Activated CD4-positive, alpha-beta T cell treated with anti-CD3 and anti-CD28 coated beads, Interleukin-2, amount 10 ng/mL, durations not matched to agents 24 days and 14 days (primary cell): ENCODE measurements at regions of chr9 and their contacts with region 1.

Region 1: GRCh38 chr9:33374634-33375213 is 27.6 kb downstream of the AQP7 start:
- DNase-seq: peak; percentile 91
- H3K4me3 Mint-ChIP-seq: peak overlapping the region; percentile 30
- H3K27ac Mint-ChIP-seq: peak overlapping the region; percentile 52
- H3K4me1 Mint-ChIP-seq: peaks cover 10% of the 10 kb centered on the region
- H3K27me3 Mint-ChIP-seq: no peaks in the 10 kb centered on the region

Region 2: DNA sequence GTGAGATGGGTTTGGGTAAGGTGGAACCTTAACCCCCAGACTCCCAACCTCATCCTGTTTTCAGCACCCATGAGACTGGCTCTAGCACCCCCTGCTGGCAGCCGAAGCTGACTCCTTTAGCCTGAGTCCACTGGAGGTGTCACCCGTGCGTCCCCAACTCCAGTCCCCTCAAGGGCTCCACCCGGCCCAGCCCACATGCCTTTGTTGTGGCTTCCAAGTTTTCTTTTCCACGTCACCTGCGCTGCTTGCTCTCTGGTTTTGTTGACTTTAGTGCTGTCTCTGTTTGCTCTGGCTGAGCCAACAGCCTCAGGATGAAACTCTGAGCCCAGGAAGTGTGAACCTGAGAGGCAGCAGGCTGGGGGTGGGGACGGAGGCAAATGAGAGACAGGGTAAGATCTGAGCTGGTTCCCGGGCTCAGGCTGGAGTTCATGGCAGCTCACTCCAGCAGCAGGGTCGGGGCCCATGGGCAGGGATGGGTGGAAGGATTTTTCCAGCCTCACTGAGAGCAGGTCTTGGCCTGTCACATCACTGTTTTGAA is 40.8 kb after region 1 on chr9:
- intact Hi-C with region 1: loop called (anchors 2 kb)
- DNase-seq: peak; percentile 98
- H3K4me3 Mint-ChIP-seq: peak overlapping the region; percentile 69
- H3K27ac Mint-ChIP-seq: peak overlapping the region; percentile 94
- H3K4me1 Mint-ChIP-seq: peaks cover 50% of the 10 kb centered on the region
- H3K27me3 Mint-ChIP-seq: peaks cover 2% of the 10 kb centered on the region

Region 3: GRCh38 chr9:33932078-33932807 is 557.5 kb after region 1 on chr9:
- intact Hi-C with region 1: no loop called
- DNase-seq: no peak
- H3K4me3 Mint-ChIP-seq: no peak overlapping the region
- H3K27ac Mint-ChIP-seq: peak overlapping the region; percentile 43
- H3K4me1 Mint-ChIP-seq: no peaks in the 10 kb centered on the region
- H3K27me3 Mint-ChIP-seq: no peaks in the 10 kb centered on the region